ENCODE measurements at regions of chr2 and their contacts with region 1.

Region 1: DNA sequence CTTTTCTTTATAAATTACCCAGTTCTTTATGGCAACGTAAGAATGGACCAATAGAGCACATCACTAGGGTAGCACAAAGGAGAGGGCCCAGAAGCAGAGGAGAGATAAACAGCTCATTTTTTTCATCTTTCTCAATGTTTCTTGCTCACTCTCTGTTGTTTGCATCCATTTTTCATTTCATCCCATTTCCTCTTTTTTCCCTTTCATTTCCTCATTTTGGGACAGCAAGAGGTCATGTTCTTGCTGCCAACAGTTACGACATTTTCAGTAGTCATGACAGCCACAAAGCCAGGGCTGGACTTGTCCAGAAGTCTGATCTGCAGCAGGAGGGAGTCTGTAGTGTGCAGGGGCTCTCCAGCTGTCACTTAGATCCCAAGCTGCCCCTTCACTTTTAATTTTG is 52.7 kb upstream of the CYP1B1 start:
- H3K4me3 Mint-ChIP-seq: no peak overlapping the region
- H3K27ac Mint-ChIP-seq: peak overlapping the region; percentile 89
- H3K4me1 Mint-ChIP-seq: peaks cover 70% of the 10 kb centered on the region
- H3K27me3 Mint-ChIP-seq: no peaks in the 10 kb centered on the region

Region 2: DNA sequence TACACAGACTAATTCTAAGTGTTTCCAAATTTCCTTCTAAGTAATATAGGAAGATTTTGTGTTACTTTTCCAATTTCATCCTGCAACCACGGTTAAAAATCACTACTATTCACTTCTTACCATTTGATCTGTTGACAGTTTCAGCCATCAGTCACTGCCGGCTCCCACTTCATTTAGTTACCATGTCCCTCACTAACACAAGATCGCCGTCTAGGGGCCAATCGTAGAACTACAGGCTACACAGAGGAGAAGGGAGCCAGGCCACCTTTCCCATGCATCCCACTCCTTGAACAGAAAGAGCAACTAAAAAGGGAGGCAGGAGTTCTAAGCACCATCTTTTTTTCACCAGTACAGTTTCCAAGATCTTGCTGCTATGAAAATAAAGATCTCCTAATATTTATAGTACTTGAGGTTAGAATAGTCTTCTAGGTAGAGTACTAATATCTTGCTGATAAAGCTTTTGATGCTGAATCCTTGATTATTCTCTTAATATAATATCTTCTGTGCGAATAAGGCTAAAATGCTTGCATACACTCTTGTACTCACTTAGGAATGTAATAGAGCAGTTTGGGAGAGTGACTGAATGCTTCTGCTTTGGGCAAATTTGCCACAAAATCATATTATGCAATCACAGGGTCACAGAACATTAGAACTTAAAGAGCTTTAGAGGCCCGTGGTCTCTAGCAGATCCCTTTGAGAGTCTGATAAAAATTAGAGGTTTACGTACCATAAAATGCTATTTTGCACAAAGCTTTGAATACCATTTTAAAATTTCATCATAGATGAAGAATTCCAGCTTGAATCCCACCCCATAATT is 13.2 kb before region 1 on chr2:
- intact Hi-C with region 1: loop called (anchors 2 kb)
- H3K4me3 Mint-ChIP-seq: no peak overlapping the region
- H3K27ac Mint-ChIP-seq: peak overlapping the region; percentile 81
- H3K4me1 Mint-ChIP-seq: peaks cover 81% of the 10 kb centered on the region
- H3K27me3 Mint-ChIP-seq: no peaks in the 10 kb centered on the region

Region 3: DNA sequence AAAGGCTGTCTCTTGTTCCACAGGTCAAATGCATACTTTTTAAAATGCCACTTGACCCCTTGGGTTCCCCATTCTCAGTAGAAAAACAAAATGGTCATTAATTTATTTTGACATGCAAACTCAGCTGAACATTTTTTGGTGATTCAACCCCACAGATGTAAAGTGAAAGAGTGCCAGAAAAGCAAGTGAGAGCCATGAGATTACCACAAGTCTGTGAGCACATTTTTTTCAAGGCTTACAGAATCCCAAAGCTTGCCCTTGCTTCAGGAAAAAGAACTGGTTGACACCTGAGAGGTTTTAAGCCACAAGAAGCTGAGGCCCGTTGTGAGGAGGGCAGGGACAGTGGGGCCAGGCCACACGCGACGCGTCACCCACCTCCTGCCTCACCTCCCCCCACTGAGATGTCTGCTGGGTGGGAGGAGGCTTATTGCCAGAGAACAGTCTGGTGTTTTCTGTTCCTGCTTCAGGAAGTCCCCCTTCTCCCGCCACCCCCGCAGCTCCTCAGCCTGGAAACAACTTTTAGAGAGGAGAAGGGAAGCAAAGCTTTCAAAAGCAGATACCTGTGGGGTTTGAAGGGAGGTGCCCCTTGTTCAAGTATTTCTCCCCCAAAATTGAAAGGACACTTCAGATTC is 17.7 kb after region 1 on chr2:
- intact Hi-C with region 1: loop called (anchors 2 kb)
- H3K4me3 Mint-ChIP-seq: no peak overlapping the region
- H3K27ac Mint-ChIP-seq: no peak overlapping the region
- H3K4me1 Mint-ChIP-seq: peaks cover 51% of the 10 kb centered on the region
- H3K27me3 Mint-ChIP-seq: no peaks in the 10 kb centered on the region

Region 4: DNA sequence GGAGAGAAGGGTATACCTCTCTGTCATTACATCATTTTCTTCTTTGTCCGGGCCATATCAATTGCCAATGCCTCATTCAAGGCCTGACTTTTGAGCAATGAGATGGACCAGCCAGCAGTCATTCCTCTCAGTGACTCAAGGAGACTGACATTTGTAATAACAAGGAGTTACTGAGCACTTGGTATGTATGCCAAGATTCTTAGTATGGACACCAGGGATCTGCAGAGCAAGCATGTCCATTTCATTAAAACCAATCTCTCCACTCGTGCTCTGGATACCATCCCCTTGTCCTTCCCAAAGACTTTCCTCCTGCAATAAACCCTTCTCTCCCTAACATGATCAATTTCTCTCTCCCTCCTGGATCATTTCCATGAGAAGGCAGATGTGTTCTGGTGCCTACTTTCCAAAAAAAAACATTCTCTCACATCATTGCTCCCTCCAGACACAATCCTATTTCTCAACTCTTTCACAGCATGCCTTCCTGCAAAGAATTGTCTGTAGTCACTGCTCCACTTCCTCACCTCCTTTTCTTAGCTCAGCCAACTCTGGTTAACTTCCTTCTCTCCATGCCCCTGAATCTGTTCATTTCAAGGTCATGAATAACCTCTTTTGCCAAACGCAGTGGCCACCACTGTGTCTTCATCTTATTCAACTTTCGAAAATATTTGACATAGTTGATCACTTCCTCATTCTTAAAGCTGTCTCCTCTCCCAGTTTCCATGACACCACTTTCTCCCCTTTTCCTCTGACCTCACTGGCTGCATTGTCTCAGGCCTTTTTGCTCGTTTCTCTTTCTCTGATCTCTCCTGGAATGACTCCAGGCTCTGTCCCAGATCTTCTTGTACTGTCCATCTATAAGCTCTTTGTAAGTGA is 50.1 kb after region 1 on chr2:
- intact Hi-C with region 1: loop called (anchors 2 kb)
- H3K4me3 Mint-ChIP-seq: peak overlapping the region; percentile 10
- H3K27ac Mint-ChIP-seq: peak overlapping the region; percentile 71
- H3K4me1 Mint-ChIP-seq: peaks cover 51% of the 10 kb centered on the region
- H3K27me3 Mint-ChIP-seq: no peaks in the 10 kb centered on the region

Region 5: GRCh38 chr2:38262069-38262871 is 133.6 kb after region 1 on chr2:
- intact Hi-C with region 1: loop called (anchors 1 kb)
- H3K4me3 Mint-ChIP-seq: no peak overlapping the region
- H3K27ac Mint-ChIP-seq: no peak overlapping the region
- H3K4me1 Mint-ChIP-seq: peaks cover 68% of the 10 kb centered on the region
- H3K27me3 Mint-ChIP-seq: no peaks in the 10 kb centered on the region